PC-3 (cell line): ENCODE measurements at regions of chr12 and their contacts with region 1.

Region 1: DNA sequence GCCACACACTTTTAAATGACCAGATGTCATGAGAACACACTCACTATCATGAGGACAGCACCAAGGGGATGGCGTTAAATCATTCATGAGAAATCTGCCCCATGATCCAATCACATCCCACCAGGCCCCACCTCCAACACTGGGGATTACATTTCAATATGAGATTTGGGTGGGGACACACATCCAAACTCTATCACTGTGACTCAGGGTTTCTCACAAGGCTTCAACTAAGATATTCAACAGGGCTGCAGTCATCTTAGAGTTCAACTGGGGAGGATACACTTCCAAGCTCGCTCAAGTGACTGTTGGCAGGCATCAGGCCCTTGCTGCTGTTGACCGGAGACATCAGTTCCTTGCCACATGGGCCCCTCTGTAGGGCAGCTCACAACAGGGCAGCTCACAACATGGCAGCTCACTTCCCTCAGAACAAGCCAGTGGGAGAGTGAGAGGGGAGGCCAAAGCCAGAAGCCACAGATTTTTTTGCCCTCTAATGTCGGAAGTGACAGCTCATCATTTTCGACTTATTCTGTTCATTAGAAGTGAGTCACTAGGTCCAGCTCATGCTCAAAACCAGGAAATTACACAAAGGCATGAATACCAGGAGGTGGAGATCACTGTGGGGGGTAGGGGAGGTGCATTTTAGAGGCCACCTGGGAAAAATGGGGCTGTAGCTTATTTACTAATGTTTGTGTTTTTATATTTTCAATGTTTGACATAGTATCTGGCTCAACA is 50.8 kb upstream of the PTHLH start:
- DNase-seq: peak; percentile 100
- ATAC-seq: peak; percentile 72
- H3K4me3 ChIP-seq: no peak overlapping the region
- H3K27ac ChIP-seq: peak overlapping the region; percentile 79
- H3K4me1 ChIP-seq: peaks cover 73% of the 10 kb centered on the region
- H3K27me3 ChIP-seq: no peaks in the 10 kb centered on the region
- CTCF ChIP-seq: no peak

Region 2: DNA sequence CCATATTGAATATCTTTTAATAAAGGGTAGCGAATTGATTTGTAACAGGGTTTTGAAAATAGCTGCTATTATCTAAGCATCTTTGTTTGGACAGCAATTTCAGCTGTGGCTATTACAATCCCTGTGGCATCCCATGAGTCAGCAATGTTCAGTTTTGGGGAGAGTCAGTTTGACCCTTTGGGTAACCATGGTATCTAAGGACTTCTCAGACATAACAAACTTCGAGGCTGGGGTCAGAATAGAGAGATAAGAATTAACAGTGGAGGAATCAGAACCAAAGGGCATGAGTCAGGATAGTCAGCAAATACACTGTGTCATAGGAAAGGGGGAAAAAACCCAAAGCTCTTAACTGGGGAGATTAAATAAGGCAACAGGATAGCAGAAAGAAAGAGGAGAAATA is 39.0 kb before region 1 on chr12:
- CTCF ChIA-PET with region 1: interaction called, 7 read pairs
- POLR2A ChIA-PET with region 1: interaction called, 33 read pairs
- intact Hi-C with region 1: loop called (anchors 1 kb)
- DNase-seq: peak; percentile 100
- ATAC-seq: peak; percentile 54
- H3K4me3 ChIP-seq: peak overlapping the region; percentile 6
- H3K27ac ChIP-seq: peak overlapping the region; percentile 73
- H3K4me1 ChIP-seq: peaks cover 47% of the 10 kb centered on the region
- H3K27me3 ChIP-seq: no peaks in the 10 kb centered on the region
- CTCF ChIP-seq: no peak

Region 3: GRCh38 chr12:28057856-28058615 is 34.7 kb after region 1 on chr12:
- CTCF ChIA-PET with region 1: interaction called, 8 read pairs
- POLR2A ChIA-PET with region 1: interaction called, 15 read pairs
- intact Hi-C with region 1: no loop called
- DNase-seq: peak; percentile 100
- ATAC-seq: peak; percentile 83
- H3K4me3 ChIP-seq: no peak overlapping the region; the same call in 1 of the 2 replicates
- H3K27ac ChIP-seq: peak overlapping the region; percentile 86
- H3K4me1 ChIP-seq: peaks cover 23% of the 10 kb centered on the region
- H3K27me3 ChIP-seq: no peaks in the 10 kb centered on the region
- CTCF ChIP-seq: no peak

Region 4: GRCh38 chr12:28172434-28173030 is 149.2 kb after region 1 on chr12:
- CTCF ChIA-PET with region 1: interaction called, 6 read pairs
- POLR2A ChIA-PET with region 1: no interaction called
- intact Hi-C with region 1: loop called (anchors 2 kb)
- DNase-seq: peak; percentile 90
- ATAC-seq: peak; percentile 98
- H3K4me3 ChIP-seq: no peak overlapping the region
- H3K27ac ChIP-seq: no peak overlapping the region
- H3K4me1 ChIP-seq: peaks cover 6% of the 10 kb centered on the region; the same call in 1 of the 2 replicates
- H3K27me3 ChIP-seq: no peaks in the 10 kb centered on the region
- CTCF ChIP-seq: peak; percentile 95

Region 5: GRCh38 chr12:28652239-28652638 is 628.9 kb after region 1 on chr12:
- CTCF ChIA-PET with region 1: no interaction called
- POLR2A ChIA-PET with region 1: interaction called, 3 read pairs
- intact Hi-C with region 1: loop called (anchors 5 kb)
- DNase-seq: peak; percentile 16
- ATAC-seq: no peak
- H3K4me3 ChIP-seq: peak overlapping the region; percentile 19
- H3K27ac ChIP-seq: no peak overlapping the region
- H3K4me1 ChIP-seq: peaks cover 3% of the 10 kb centered on the region; the same call in 1 of the 2 replicates
- H3K27me3 ChIP-seq: no peaks in the 10 kb centered on the region
- CTCF ChIP-seq: no peak

Region 6: DNA sequence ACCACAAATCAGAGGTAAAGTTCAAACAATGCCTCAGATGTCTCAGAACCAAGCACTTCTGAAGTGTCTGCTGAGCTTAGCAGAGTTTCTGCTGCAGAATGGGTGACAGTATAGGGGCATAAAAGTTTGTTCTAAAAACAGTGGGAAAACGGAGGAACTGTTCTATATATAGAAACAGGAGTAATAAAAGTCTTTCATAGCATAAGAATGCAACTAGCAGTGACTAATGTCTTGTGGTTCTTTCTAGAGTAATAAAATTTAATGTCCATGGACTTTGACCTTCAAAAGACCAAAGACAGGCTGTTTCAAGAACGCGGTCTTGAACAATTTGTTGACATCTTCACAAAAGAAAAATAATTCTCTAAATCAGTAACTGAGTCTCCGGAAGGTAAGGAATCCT is 1018.3 kb after region 1 on chr12:
- CTCF ChIA-PET with region 1: no interaction called
- POLR2A ChIA-PET with region 1: no interaction called
- intact Hi-C with region 1: loop called (anchors 1 kb)
- DNase-seq: peak; percentile 99
- ATAC-seq: peak; percentile 85
- H3K4me3 ChIP-seq: peak overlapping the region; percentile 34; the same call in 1 of the 2 replicates
- H3K27ac ChIP-seq: peak overlapping the region; percentile 88
- H3K4me1 ChIP-seq: peaks cover 49% of the 10 kb centered on the region
- H3K27me3 ChIP-seq: no peaks in the 10 kb centered on the region
- CTCF ChIP-seq: no peak